ENCODE measurements at regions of chr3 and their contacts with region 1.

Region 1: DNA sequence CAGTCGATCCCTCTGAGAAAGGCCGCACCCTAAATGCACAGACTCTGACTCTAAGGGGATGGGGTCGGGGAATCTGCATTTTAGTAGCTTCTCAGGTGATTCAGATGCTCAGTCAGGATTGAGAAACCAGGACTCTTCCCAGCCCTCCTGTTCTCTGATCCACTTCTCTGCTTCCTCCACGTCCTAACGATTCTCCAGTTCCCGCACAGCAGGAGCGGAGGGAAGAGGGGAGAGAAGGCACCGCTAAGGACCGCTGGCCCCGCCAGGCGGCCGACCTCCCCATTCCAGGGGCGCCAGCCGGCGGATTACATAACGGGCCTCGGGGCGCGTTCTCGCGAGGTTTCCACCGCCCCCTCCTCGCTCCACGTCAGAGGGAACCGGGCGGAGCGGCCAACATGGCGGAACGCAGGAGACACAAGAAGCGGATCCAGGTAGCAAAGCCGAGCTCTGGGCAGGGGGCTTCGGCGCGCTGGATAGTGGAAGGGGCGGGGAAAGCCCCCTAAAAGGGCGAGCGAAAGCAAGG is at the start of gene SEC62:
- DNase-seq: peak; percentile 88 to 96 (median 95)
- ATAC-seq: peak; percentile 87
- H3K4me3 ChIP-seq: peak within 1 kb of the TSS; percentile 84 to 87
- H3K4me3 Mint-ChIP-seq: peak within 1 kb of the TSS; percentile 90
- H3K27ac ChIP-seq: peak within 1 kb of the TSS; percentile 94 to 96
- H3K27ac Mint-ChIP-seq: peak within 1 kb of the TSS; percentile 99
- H3K4me1 ChIP-seq: peaks cover 42% of the 10 kb centered on the region
- H3K4me1 Mint-ChIP-seq: peaks cover 54% of the 10 kb centered on the region
- H3K27me3 ChIP-seq: no peaks in the 10 kb centered on the region
- H3K27me3 Mint-ChIP-seq: no peaks in the 10 kb centered on the region
- CTCF ChIP-seq: no peak
- total RNA-seq, gene SEC62: 115 TPM

Region 2: DNA sequence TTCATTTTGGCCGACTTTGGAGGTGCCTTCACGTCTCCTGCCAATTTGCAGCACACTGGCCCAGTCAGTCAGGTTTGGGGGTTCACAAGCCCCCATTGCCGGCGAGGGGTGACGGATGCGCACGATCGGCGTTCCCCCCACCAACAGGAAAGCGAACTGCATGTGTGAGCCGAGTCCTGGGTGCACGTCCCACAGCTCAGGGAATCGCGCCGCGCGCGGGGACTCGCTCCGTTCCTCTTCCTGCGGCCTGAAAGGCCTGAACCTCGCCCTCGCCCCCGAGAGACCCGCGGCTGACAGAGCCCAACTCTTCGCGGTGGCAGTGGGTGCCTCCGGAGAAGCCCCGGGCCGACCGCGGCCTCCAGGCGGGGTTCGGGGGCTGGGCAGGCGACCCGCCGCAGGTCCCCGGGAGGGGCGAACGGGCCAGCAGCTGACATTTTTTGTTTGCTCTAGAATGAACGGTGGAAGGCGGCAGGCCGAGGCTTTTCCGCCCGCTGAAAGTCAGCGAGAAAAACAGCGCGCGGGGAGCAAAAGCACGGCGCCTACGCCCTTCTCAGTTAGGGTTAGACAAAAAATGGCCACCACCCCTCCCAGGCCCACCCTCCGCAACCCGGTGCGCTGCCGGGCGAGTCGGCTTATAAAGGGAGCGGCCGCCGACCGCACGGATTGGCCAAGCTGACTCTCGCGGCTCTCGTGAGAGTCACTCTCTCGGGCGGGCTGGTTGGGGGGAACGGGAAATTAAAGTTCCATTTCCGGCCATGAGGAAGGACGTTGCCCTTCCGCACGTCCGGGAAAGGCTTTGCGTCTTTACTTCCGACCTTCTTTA is 201.8 kb before region 1 on chr3 and contains the start of gene TERC:
- CTCF ChIA-PET with region 1: interaction called, 7 read pairs
- POLR2A ChIA-PET with region 1: interaction called, 36 read pairs
- intact Hi-C with region 1: loop called (anchors 1 to 2 kb)
- DNase-seq: peak; percentile 84 to 98 (median 93)
- ATAC-seq: peak; percentile 84
- H3K4me3 ChIP-seq: peak within 1 kb of the TSS; percentile 79 to 81
- H3K4me3 Mint-ChIP-seq: peak within 1 kb of the TSS; percentile 96
- H3K27ac ChIP-seq: peak within 1 kb of the TSS; percentile 91 to 93
- H3K27ac Mint-ChIP-seq: peak within 1 kb of the TSS; percentile 98
- H3K4me1 ChIP-seq: peaks cover 14% of the 10 kb centered on the region
- H3K4me1 Mint-ChIP-seq: peaks cover 25% of the 10 kb centered on the region
- H3K27me3 ChIP-seq: no peaks in the 10 kb centered on the region
- H3K27me3 Mint-ChIP-seq: no peaks in the 10 kb centered on the region
- CTCF ChIP-seq: no peak
- total RNA-seq, gene TERC: 12.7 to 13.3 TPM

Region 3: DNA sequence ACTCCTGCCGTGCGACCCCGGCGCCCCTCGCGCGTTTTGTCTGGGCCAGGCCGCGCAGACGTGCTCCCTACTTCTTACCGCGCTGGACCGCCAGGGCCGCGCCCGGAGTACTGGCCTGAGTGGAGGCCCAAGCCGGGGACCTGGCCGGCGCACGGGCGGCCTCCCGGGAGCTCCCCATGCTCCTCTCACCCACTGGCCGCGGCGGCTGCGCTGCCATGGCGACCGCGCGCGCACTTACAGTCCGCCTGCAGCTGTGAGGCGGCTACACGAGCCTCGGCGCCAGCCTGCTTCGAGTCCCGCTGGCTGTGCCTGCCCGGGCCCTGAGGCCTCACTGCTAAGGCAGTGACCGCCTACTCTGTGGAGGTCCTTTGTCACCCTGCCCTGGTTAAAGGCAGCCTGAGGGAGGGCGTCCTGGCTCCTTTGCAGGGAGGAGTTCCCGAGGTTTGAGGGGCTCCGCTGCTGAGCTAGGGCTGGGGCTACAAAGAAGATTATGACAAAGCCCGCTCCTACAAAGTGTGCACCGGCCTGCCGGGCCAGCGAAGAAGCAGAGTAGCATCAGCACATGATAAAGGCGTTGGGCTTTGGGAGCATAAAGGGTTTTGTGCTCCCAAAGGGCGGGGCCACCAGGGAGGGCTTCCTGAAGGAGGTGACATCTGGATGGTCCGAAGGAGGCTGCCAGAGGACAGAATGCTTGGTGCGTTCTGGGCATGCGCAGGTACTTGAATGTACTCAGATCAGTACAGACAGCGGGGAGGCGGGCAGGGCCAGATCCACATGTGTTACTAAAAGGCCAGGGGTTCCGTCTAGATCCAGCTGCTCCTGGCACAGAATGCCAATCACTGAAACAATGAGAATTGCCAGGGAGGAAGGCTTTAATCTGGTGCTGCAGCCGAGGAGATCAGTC is 153.9 kb before region 1 on chr3 and contains the starts of genes LRRC34 and LRRIQ4:
- CTCF ChIA-PET with region 1: no interaction called
- POLR2A ChIA-PET with region 1: no interaction called
- intact Hi-C with region 1: loop called (anchors 2 kb)
- DNase-seq: peak; percentile 12 to 79 (median 68)
- ATAC-seq: peak; percentile 37
- H3K4me3 ChIP-seq: peak within 1 kb of the TSS; percentile 47 to 54
- H3K4me3 Mint-ChIP-seq: peak within 1 kb of the TSS; percentile 89
- H3K27ac ChIP-seq: peak within 1 kb of the TSS; percentile 2
- H3K27ac Mint-ChIP-seq: peak within 1 kb of the TSS; percentile 74
- H3K4me1 ChIP-seq: peaks cover 16% of the 10 kb centered on the region
- H3K4me1 Mint-ChIP-seq: peaks cover 28% of the 10 kb centered on the region
- H3K27me3 ChIP-seq: no peaks in the 10 kb centered on the region
- H3K27me3 Mint-ChIP-seq: no peaks in the 10 kb centered on the region
- CTCF ChIP-seq: no peak
- total RNA-seq, gene LRRC34: 0.36 to 0.54 TPM
- total RNA-seq, gene LRRIQ4: not detected

Region 4: GRCh38 chr3:169980055-169980454 is 13.6 kb after region 1 on chr3:
- CTCF ChIA-PET with region 1: interaction called, 7 read pairs
- POLR2A ChIA-PET with region 1: interaction called, 21 read pairs
- intact Hi-C with region 1: no loop called
- DNase-seq: no peak
- ATAC-seq: no peak
- H3K4me3 ChIP-seq: no peak overlapping the region
- H3K4me3 Mint-ChIP-seq: no peak overlapping the region
- H3K27ac ChIP-seq: no peak overlapping the region
- H3K27ac Mint-ChIP-seq: no peak overlapping the region
- H3K4me1 ChIP-seq: no peaks in the 10 kb centered on the region
- H3K4me1 Mint-ChIP-seq: peaks cover 8% of the 10 kb centered on the region
- H3K27me3 ChIP-seq: no peaks in the 10 kb centered on the region
- H3K27me3 Mint-ChIP-seq: no peaks in the 10 kb centered on the region
- CTCF ChIP-seq: no peak

Region 5: DNA sequence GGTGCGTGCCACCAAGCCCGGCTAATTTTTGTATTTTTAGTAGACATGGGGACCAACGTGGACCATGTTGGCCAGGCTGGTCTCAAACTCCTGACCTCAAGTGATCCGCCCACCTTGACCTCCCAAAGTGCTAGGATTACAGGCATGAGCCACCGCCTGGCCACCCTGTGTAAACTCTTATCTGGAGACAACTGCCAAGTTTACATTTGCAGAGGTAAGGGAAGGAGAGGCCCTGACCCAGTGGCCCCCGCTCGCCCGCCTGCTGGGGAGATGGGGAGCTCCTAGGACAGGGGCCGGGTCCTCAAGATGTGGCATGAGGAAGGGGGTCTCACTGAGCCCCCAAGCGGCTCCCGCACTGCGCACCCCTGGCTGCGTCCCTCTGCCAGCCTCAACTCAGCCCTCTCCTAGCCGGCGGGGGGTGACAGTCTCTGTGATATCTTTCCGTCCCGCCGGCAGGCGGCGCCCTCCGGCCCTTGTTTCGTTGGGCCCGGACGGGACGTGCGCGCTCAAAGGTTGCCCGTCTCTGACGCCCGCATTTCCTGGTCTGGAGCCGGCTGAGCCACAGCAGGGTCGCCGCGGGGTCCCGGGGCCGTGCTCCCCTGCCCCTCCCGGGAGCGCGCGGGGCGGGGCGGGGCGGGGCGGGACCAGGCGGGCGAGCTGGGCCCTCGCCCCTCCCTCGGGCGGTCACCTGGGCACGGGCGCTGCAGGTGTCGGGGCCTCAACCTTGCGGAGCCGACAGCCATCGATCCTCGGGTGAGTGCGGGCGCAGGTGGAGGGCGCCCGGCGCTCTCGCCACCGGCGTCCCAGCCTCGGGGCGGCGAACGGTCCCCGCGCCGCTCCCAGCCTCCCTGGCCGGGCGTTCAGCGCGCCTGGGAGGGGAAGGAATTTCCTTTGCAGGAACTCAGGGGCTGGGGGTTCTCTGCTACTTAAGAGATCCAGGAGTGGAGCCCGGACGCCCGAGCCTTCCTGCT is 71.3 kb after region 1 on chr3 and contains the start of gene GPR160:
- CTCF ChIA-PET with region 1: interaction called, 5 read pairs
- POLR2A ChIA-PET with region 1: interaction called, 5 read pairs
- intact Hi-C with region 1: loop called (anchors 1 to 2 kb)
- DNase-seq: peak; percentile 61 to 89 (median 81)
- ATAC-seq: peak; percentile 73
- H3K4me3 ChIP-seq: peak within 1 kb of the TSS; percentile 73 to 82
- H3K4me3 Mint-ChIP-seq: peak within 1 kb of the TSS; percentile 88
- H3K27ac ChIP-seq: peak within 1 kb of the TSS in 1 of 2 experiments; percentile 45
- H3K27ac Mint-ChIP-seq: peak within 1 kb of the TSS; percentile 71
- H3K4me1 ChIP-seq: peaks cover 32% of the 10 kb centered on the region
- H3K4me1 Mint-ChIP-seq: peaks cover 22% of the 10 kb centered on the region
- H3K27me3 ChIP-seq: no peaks in the 10 kb centered on the region
- H3K27me3 Mint-ChIP-seq: no peaks in the 10 kb centered on the region
- CTCF ChIP-seq: peak; percentile 87
- total RNA-seq, gene GPR160: 2.9 to 3.7 TPM

Region 6: DNA sequence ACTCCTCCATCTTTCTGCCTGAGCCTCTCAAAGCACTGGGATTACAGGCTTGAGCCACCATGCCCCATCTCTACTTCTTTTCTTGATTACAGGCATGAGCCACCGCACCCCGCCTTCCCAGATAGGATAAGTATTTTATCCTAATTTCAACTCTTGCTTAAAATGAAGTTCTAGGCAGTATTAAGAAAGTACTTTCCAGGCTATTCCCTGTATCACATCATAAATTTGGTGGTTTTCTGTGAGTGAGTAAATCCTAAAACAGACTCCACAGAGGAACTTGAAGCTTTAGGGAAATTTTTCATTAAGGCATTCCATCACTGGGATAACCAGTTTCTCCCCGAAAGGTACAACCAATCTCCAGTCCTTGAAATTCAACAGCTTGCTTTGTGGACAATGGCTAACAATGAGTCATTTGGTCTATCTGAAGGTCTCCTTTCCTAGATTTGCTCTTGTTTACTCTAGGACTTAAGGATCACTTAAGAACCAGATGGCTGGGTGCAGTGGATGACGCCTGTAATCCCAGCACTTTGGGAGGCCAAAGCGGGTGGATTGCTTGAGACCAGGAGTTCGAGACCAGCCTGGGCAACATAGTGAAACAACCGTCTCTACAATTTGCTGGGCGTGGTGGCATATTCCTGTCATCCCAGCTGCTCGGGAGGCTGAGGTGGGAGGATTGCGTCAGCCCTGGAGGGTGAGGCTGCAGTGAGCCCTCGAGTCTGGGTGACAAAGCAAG is 341.3 kb after region 1 on chr3:
- CTCF ChIA-PET with region 1: no interaction called
- POLR2A ChIA-PET with region 1: no interaction called
- intact Hi-C with region 1: no loop called
- DNase-seq: no peak
- ATAC-seq: no peak
- H3K4me3 ChIP-seq: no peak overlapping the region
- H3K4me3 Mint-ChIP-seq: no peak overlapping the region
- H3K27ac ChIP-seq: no peak overlapping the region
- H3K27ac Mint-ChIP-seq: no peak overlapping the region
- H3K4me1 ChIP-seq: no peaks in the 10 kb centered on the region
- H3K4me1 Mint-ChIP-seq: no peaks in the 10 kb centered on the region
- H3K27me3 ChIP-seq: no peaks in the 10 kb centered on the region
- H3K27me3 Mint-ChIP-seq: no peaks in the 10 kb centered on the region
- CTCF ChIP-seq: no peak

Region 7: GRCh38 chr3:170357176-170357919 is 390.9 kb after region 1 on chr3 and contains the start of gene SKIL:
- CTCF ChIA-PET with region 1: interaction called, 3 read pairs
- POLR2A ChIA-PET with region 1: interaction called, 4 read pairs
- intact Hi-C with region 1: loop called (anchors 1 to 10 kb)
- DNase-seq: peak; percentile 94 to 99 (median 97)
- ATAC-seq: peak; percentile 69
- H3K4me3 ChIP-seq: peak within 1 kb of the TSS; percentile 55 to 76
- H3K4me3 Mint-ChIP-seq: peak within 1 kb of the TSS; percentile 95
- H3K27ac ChIP-seq: peak within 1 kb of the TSS; percentile 91 to 96
- H3K27ac Mint-ChIP-seq: peak within 1 kb of the TSS; percentile 99
- H3K4me1 ChIP-seq: peaks cover 24% of the 10 kb centered on the region
- H3K4me1 Mint-ChIP-seq: peaks cover 52% of the 10 kb centered on the region
- H3K27me3 ChIP-seq: no peaks in the 10 kb centered on the region
- H3K27me3 Mint-ChIP-seq: no peaks in the 10 kb centered on the region
- CTCF ChIP-seq: no peak
- total RNA-seq, gene SKIL: 160 to 177 TPM

Region 8: DNA sequence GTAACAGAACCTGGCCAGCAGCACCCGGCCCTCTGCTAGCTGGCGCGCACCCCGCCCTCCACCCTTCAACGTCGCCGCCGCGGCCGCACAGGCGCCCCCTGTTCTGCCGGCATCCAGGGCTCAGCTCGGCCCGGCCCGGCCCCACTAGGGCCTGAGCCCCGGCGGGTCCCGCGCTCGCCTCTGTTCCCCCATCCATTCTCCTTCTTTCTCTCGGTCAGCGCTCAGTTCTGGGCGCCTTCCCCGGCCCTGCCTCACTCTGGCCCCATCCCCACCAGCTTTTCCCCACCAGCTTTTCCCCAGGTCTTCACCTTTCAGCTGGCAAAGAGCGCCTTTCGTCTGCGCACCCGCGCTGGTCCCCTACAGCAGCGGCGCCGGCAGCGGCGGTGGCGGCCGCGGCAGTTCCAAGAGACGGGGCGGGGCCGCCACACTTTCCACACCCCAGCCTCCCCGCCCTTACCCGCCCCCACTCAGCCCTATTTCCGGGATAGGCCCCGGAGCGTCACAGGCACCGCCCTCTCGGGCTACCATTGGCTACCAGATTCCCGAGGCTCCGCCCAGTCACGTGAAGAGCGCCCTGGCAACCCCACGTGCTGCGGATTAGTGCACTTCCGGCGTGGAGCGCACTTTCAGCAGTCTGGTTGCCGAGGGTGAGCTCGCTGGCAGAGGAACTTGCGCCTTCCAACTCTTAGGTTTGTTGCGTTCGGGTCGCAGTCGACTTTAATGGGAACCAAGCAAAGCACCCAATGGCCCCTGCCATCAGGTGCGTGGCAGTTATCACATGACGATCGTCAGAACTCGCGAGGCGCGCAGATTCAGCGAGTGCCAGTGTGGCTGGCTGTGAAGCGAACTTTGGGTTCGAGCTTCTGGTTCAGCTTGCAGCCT is 942.0 kb after region 1 on chr3 and contains the start of gene EIF5A2:
- CTCF ChIA-PET with region 1: no interaction called
- POLR2A ChIA-PET with region 1: no interaction called
- intact Hi-C with region 1: loop called in 1 of 2 experiments (anchors 10 kb)
- DNase-seq: peak; percentile 89 to 98 (median 95)
- ATAC-seq: peak; percentile 96
- H3K4me3 ChIP-seq: peak within 1 kb of the TSS; percentile 66 to 68
- H3K4me3 Mint-ChIP-seq: peak within 1 kb of the TSS; percentile 95
- H3K27ac ChIP-seq: peak within 1 kb of the TSS; percentile 67 to 79
- H3K27ac Mint-ChIP-seq: peak within 1 kb of the TSS; percentile 97
- H3K4me1 ChIP-seq: peaks cover 12% of the 10 kb centered on the region
- H3K4me1 Mint-ChIP-seq: peaks cover 20% of the 10 kb centered on the region
- H3K27me3 ChIP-seq: no peaks in the 10 kb centered on the region
- H3K27me3 Mint-ChIP-seq: no peaks in the 10 kb centered on the region
- CTCF ChIP-seq: no peak
- total RNA-seq, gene EIF5A2: 10.6 to 12.7 TPM

Region 9: GRCh38 chr3:171142985-171143384 is 1176.5 kb after region 1 on chr3:
- CTCF ChIA-PET with region 1: no interaction called
- POLR2A ChIA-PET with region 1: no interaction called
- intact Hi-C with region 1: no loop called
- DNase-seq: no peak
- ATAC-seq: no peak
- H3K4me3 ChIP-seq: no peak overlapping the region
- H3K4me3 Mint-ChIP-seq: no peak overlapping the region
- H3K27ac ChIP-seq: no peak overlapping the region
- H3K27ac Mint-ChIP-seq: no peak overlapping the region
- H3K4me1 ChIP-seq: no peaks in the 10 kb centered on the region
- H3K4me1 Mint-ChIP-seq: no peaks in the 10 kb centered on the region
- H3K27me3 ChIP-seq: no peaks in the 10 kb centered on the region
- H3K27me3 Mint-ChIP-seq: no peaks in the 10 kb centered on the region
- CTCF ChIP-seq: no peak